Endothelial cell of umbilical vein (primary cell): ENCODE measurements at regions of chr1 and their contacts with region 1.

Region 1: GRCh38 chr1:209354111-209354839 is 229.2 kb upstream of the CAMK1G start:
- DNase-seq: peak; percentile 57
- H3K4me3 ChIP-seq: no peak overlapping the region
- H3K27ac ChIP-seq: no peak overlapping the region
- H3K4me1 ChIP-seq: no peaks in the 10 kb centered on the region
- H3K27me3 ChIP-seq: peaks cover 0 to 2% of the 10 kb centered on the region in 2 experiments
- CTCF ChIP-seq: peak; percentile 81 to 90
- POLR2A ChIP-seq: no peak

Region 2: GRCh38 chr1:209207701-209208286 is 146.5 kb before region 1 on chr1:
- CTCF ChIA-PET with region 1: interaction called, 3 read pairs
- POLR2A ChIA-PET with region 1: no interaction called
- dilution Hi-C with region 1: no loop called
- intact Hi-C with region 1: loop called (anchors 5 kb)
- DNase-seq: peak; percentile 73
- H3K4me3 ChIP-seq: no peak overlapping the region
- H3K27ac ChIP-seq: no peak overlapping the region
- H3K4me1 ChIP-seq: no peaks in the 10 kb centered on the region
- H3K27me3 ChIP-seq: peaks cover 16 to 23% of the 10 kb centered on the region in 2 experiments
- CTCF ChIP-seq: peak; percentile 77 to 87
- POLR2A ChIP-seq: no peak

Region 3: DNA sequence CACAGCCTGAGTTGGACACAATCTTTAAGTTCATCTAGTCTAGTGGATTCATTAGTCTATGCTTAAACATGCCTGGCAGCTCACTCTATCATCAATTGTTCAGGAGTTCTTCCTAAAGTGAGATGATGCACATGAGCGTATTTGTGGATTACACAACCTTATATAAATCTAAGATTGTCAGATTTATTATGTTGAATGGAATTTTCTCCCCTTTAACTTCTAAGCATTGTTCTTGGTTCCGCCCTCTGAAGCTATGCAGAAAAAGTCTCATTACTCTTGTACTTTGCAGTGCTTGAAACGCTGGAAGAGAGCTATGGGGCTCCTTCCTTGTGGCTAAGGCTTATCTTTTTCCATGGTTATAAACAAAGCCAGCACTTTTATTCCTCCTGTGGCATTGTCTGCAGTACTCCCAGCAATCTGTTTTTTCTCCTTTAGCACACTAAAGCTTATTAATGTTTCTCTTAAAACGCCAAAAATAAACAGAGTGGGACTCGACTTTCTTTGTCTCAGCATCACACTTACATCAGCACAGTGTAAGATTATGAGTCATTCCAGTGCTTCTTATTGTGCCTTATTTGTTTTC is 87.6 kb before region 1 on chr1:
- CTCF ChIA-PET with region 1: no interaction called
- POLR2A ChIA-PET with region 1: no interaction called
- dilution Hi-C with region 1: no loop called
- intact Hi-C with region 1: no loop called
- DNase-seq: no peak
- H3K4me3 ChIP-seq: no peak overlapping the region
- H3K27ac ChIP-seq: no peak overlapping the region
- H3K4me1 ChIP-seq: no peaks in the 10 kb centered on the region
- H3K27me3 ChIP-seq: no peaks in the 10 kb centered on the region
- CTCF ChIP-seq: no peak
- POLR2A ChIP-seq: no peak

Region 4: GRCh38 chr1:209844695-209845407 is 490.6 kb after region 1 on chr1:
- CTCF ChIA-PET with region 1: no interaction called
- POLR2A ChIA-PET with region 1: no interaction called
- dilution Hi-C with region 1: no loop called
- intact Hi-C with region 1: no loop called
- DNase-seq: no peak
- H3K4me3 ChIP-seq: no peak overlapping the region
- H3K27ac ChIP-seq: no peak overlapping the region
- H3K4me1 ChIP-seq: peaks cover 27% of the 10 kb centered on the region
- H3K27me3 ChIP-seq: no peaks in the 10 kb centered on the region
- CTCF ChIP-seq: no peak
- POLR2A ChIP-seq: no peak